ENCODE measurements at regions of chr11 and their contacts with region 1.

Region 1: DNA sequence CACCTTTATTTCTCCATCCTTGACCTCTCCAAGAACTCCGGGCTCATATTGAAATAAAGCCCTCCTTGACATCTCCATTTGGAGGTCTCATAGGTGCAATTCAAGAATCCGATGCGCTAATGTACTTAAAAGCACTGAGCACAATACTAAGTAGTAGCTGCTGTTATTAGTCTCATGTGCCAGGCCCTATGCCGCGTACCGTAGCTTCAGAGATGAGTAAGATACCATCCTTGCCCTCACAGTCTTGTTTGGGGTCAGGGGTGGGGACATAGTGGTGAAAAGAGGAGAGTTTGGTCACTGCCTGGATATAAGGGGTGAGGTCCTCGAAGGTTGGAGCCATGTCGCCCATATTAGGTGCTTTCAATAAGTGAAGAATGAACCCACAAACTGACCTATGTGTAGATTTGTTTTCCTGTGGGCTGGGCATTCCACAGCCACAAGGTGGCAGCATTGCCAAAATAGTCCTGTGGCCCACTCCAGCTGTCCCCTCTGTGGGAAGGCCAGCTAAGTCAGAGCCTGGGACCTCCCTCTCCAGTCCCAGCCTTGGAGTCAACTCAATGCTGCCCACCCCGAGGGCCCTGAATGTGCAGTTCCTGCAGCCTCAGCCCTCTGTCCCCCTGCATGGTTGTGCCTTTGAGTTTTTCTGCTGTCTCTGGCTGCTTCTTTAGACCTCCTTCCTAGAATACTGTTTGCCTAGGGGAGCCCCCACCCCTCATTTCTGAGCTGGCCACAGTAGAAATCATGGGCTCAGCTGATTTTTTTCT is 6.5 kb downstream of the DCPS start:
- DNase-seq: peak; percentile 95
- H3K4me3 ChIP-seq: no peak overlapping the region
- H3K27ac ChIP-seq: peak overlapping the region in 1 of 4 donors; percentile 8
- H3K4me1 ChIP-seq: peaks cover 8 to 20% (median 17%) of the 10 kb centered on the region in 4 donors
- H3K27me3 ChIP-seq: no peaks in the 10 kb centered on the region
- CTCF ChIP-seq: peak; percentile 86 to 93 (median 88)
- EP300 ChIP-seq: no peak
- POLR2A ChIP-seq: no peak

Region 2: DNA sequence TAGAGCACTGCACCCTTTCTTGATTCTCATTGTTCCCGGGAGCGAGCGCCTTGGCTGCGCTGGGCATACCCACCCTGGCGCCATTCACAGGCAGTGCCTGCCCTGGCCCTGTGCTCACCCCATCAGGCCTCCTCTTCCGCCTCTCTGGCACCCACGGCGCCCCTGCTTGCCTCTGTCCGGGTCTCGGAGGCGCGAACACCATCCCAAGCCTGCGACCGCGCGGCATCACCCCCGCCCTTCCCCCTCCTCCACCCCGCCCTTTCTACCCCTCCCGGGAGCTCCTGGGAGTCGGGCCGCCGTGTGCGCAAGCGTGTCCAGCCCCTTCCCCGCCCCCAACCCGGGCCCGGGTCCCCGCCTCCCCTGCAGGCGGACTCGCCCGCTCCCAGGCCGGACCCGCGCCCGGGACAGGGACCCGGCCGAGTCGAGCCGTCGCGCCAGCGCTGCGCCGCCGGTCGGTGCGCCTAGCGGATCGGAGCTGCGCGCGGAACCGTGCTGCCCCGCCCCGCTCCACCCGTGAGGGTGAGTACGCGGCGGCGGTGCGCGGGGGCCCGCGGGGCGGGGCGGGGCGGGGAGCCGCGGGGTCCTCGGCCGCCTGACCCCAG is 45.0 kb after region 1 on chr11 and contains the start of gene ST3GAL4:
- intact Hi-C with region 1: loop called (anchors 5 kb)
- DNase-seq: no peak
- H3K4me3 ChIP-seq: peak within 1 kb of the TSS; percentile 62 to 88 (median 78)
- H3K27ac ChIP-seq: peak within 1 kb of the TSS; percentile 85 to 89 (median 86)
- H3K4me1 ChIP-seq: peaks cover 71 to 94% (median 92%) of the 10 kb centered on the region in 4 donors
- H3K27me3 ChIP-seq: no peaks in the 10 kb centered on the region
- CTCF ChIP-seq: no peak
- EP300 ChIP-seq: no peak
- POLR2A ChIP-seq: no peak
- total RNA-seq, gene ST3GAL4: 40.0 to 52.4 (median 40.5) TPM

Region 3: GRCh38 chr11:126416542-126417090 is 106.2 kb after region 1 on chr11:
- intact Hi-C with region 1: loop called (anchors 5 kb)
- DNase-seq: peak; percentile 95
- H3K4me3 ChIP-seq: peak overlapping the region; percentile 54 to 65 (median 58)
- H3K27ac ChIP-seq: peak overlapping the region; percentile 83 to 90 (median 86)
- H3K4me1 ChIP-seq: peaks cover 37 to 75% (median 64%) of the 10 kb centered on the region in 4 donors
- H3K27me3 ChIP-seq: no peaks in the 10 kb centered on the region
- CTCF ChIP-seq: no peak
- EP300 ChIP-seq: no peak
- POLR2A ChIP-seq: no peak

Region 4: GRCh38 chr11:126480410-126481302 is 170.2 kb after region 1 on chr11:
- intact Hi-C with region 1: loop called (anchors 2 kb)
- DNase-seq: peak; percentile 96
- H3K4me3 ChIP-seq: peak overlapping the region in 3 of 4 donors; percentile 10 to 30 (median 21)
- H3K27ac ChIP-seq: peak overlapping the region; percentile 68 to 77 (median 74)
- H3K4me1 ChIP-seq: peaks cover 5 to 14% (median 6%) of the 10 kb centered on the region in 4 donors
- H3K27me3 ChIP-seq: no peaks in the 10 kb centered on the region
- CTCF ChIP-seq: peak; percentile 93 to 95 (median 95)
- EP300 ChIP-seq: no peak
- POLR2A ChIP-seq: no peak